IMR-90 (cell line): ENCODE measurements at regions of chr4 and their contacts with region 1.

Region 1: DNA sequence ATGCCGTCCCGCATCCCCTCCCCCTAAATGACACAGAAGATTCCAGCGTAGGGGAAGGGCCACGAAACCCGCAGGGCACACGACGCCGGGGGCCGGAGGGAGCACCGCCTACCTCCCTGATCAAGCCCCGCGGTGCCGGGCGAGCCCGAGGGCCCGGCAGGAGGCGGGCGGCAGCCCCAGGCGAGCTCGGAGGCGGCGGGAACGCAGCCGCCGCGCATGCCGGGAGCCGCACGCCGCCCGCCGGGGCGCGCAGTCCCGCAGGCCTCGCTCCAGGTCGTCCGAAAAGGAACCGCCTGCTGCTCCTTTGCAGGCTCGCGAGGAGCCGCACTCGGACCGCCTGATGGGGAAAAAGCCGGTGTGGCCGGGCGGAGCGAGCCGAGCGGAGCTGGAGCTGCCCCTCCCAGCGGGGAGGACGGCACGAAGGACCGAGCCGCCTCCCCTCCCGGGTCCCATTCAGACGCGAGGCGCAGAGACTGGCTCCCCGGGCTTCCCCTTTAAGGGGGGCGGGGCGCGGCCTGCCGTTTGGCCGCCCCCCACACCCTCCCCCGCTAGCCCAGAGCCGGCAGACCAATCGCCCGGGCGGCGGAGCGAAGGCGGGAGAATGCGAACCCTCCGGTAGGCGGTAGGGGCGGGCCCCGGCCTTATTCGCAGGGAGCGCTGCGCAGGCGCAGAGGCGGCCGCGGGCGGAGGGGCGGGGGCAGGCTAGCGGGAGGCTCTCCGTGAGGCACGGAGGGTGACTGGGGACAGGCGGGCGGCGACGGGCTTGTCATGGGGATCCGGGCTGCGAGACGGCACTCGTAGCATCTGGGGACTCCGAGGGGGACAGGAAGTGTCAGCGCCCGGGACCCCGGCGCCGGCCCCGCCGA is 561 bp upstream of the ING2 start:
- DNase-seq: peak; percentile 96
- ATAC-seq: peak; percentile 86
- H3K4me3 ChIP-seq: peak overlapping the region; percentile 94
- H3K27ac ChIP-seq: peak overlapping the region; percentile 92
- H3K4me1 ChIP-seq: peaks cover 2% of the 10 kb centered on the region; the same call in 1 of the 2 replicates
- H3K27me3 ChIP-seq: no peaks in the 10 kb centered on the region
- CTCF ChIP-seq: peak; percentile 44
- POLR2A ChIP-seq: peak; percentile 74
- RAD21 ChIP-seq: peak; percentile 51

Region 2: GRCh38 chr4:183449193-183449882 is 55.0 kb before region 1 on chr4:
- CTCF ChIA-PET with region 1: interaction called, 5 read pairs
- POLR2A ChIA-PET with region 1: no interaction called
- dilution Hi-C with region 1: no loop called
- in situ Hi-C with region 1: no loop called
- intact Hi-C with region 1: loop called (anchors 2 kb)
- DNase-seq: peak; percentile 94
- ATAC-seq: peak; percentile 73
- H3K4me3 ChIP-seq: no peak overlapping the region
- H3K27ac ChIP-seq: no peak overlapping the region
- H3K4me1 ChIP-seq: no peaks in the 10 kb centered on the region; the same call in 1 of the 2 replicates
- H3K27me3 ChIP-seq: no peaks in the 10 kb centered on the region
- CTCF ChIP-seq: no peak
- POLR2A ChIP-seq: no peak; the same call in 1 of the 2 replicates
- RAD21 ChIP-seq: no peak

Region 3: GRCh38 chr4:183596067-183596757 is 91.9 kb after region 1 on chr4:
- CTCF ChIA-PET with region 1: interaction called, 3 read pairs
- POLR2A ChIA-PET with region 1: no interaction called
- dilution Hi-C with region 1: no loop called
- in situ Hi-C with region 1: no loop called
- intact Hi-C with region 1: loop called (anchors 2 kb)
- DNase-seq: no peak
- ATAC-seq: peak; percentile 51
- H3K4me3 ChIP-seq: no peak overlapping the region
- H3K27ac ChIP-seq: no peak overlapping the region
- H3K4me1 ChIP-seq: peaks cover 2% of the 10 kb centered on the region; the same call in 1 of the 2 replicates
- H3K27me3 ChIP-seq: no peaks in the 10 kb centered on the region; the same call in 1 of the 2 replicates
- CTCF ChIP-seq: no peak
- POLR2A ChIP-seq: no peak
- RAD21 ChIP-seq: no peak

Region 4: GRCh38 chr4:183636923-183637322 is 132.6 kb after region 1 on chr4:
- CTCF ChIA-PET with region 1: no interaction called
- POLR2A ChIA-PET with region 1: no interaction called
- dilution Hi-C with region 1: no loop called
- in situ Hi-C with region 1: no loop called
- intact Hi-C with region 1: loop called (anchors 5 kb)
- DNase-seq: peak; percentile 53
- ATAC-seq: 0 out of 2 replicates have a peak, but pooled peaks have one; percentile 16
- H3K4me3 ChIP-seq: no peak overlapping the region
- H3K27ac ChIP-seq: peak overlapping the region; percentile 70; the same call in 1 of the 2 replicates
- H3K4me1 ChIP-seq: peaks cover 20% of the 10 kb centered on the region
- H3K27me3 ChIP-seq: no peaks in the 10 kb centered on the region
- CTCF ChIP-seq: no peak
- POLR2A ChIP-seq: no peak
- RAD21 ChIP-seq: no peak

Region 5: DNA sequence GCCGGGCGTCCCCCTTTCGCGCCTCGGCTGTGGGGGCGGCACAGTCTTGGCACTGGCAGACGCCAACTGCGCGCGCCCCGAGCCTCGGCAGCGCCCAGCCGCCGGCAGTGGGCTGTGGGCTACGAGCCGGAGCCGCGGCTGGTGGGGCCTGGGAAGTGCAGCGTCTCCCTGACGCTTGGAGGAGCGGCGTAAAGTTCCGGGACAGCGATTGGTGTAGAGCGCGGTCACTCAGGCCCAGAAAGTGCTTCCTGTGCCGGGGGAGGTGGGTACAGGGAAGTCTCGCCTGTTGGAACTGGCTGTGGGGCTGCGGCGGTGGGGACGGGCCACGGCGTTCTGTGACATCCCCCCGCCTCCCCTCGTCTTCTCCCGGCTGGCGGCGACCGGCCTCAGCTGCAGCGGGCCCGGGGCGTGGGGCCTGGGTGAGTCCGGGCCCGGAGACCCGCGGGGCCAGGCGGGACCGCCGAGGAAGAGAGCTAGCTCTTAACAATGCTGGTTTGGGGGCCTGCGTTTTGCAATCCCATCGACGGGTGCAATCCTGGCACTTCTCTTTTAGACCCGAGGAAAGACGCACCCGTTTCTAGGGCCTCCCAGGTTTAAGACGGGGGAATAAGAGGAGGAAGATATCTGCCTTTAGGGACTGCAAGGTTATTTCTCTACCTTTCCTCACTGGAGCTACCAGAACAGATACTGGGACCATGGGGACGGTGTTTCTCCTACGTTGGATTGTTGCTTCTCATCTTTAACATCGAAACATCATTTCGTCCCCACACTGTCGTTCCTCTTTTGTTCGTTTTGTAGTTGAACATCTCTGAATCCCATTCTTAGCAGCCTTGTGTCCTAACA is 155.0 kb after region 1 on chr4 and contains the starts of genes RWDD4 and TRAPPC11:
- CTCF ChIA-PET with region 1: no interaction called
- POLR2A ChIA-PET with region 1: no interaction called
- dilution Hi-C with region 1: no loop called
- in situ Hi-C with region 1: no loop called
- intact Hi-C with region 1: loop called (anchors 1 kb)
- DNase-seq: peak; percentile 99
- ATAC-seq: peak; percentile 99
- H3K4me3 ChIP-seq: peak within 1 kb of the TSS; percentile 98
- H3K27ac ChIP-seq: peak within 1 kb of the TSS; percentile 79
- H3K4me1 ChIP-seq: no peaks in the 10 kb centered on the region; the same call in 1 of the 2 replicates
- H3K27me3 ChIP-seq: no peaks in the 10 kb centered on the region
- CTCF ChIP-seq: 0 out of 2 replicates have a peak, but pooled peaks have one; percentile 21
- POLR2A ChIP-seq: no peak
- RAD21 ChIP-seq: no peak
- total RNA-seq, gene RWDD4: 8.8 and 22.2 TPM in 2 replicates
- total RNA-seq, gene TRAPPC11: 38.9 and 56.8 TPM in 2 replicates

Region 6: GRCh38 chr4:184156163-184156920 is 652.0 kb after region 1 on chr4:
- CTCF ChIA-PET with region 1: no interaction called
- POLR2A ChIA-PET with region 1: no interaction called
- dilution Hi-C with region 1: no loop called
- in situ Hi-C with region 1: no loop called
- intact Hi-C with region 1: no loop called
- DNase-seq: no peak
- ATAC-seq: no peak
- H3K4me3 ChIP-seq: no peak overlapping the region
- H3K27ac ChIP-seq: no peak overlapping the region
- H3K4me1 ChIP-seq: no peaks in the 10 kb centered on the region
- H3K27me3 ChIP-seq: peaks cover 2% of the 10 kb centered on the region; the same call in 1 of the 2 replicates
- CTCF ChIP-seq: no peak
- POLR2A ChIP-seq: no peak
- RAD21 ChIP-seq: no peak